Posterior vena cava (tissue), 2 donors: ENCODE measurements at regions of chr1 and their contacts with region 1.

Region 1: DNA sequence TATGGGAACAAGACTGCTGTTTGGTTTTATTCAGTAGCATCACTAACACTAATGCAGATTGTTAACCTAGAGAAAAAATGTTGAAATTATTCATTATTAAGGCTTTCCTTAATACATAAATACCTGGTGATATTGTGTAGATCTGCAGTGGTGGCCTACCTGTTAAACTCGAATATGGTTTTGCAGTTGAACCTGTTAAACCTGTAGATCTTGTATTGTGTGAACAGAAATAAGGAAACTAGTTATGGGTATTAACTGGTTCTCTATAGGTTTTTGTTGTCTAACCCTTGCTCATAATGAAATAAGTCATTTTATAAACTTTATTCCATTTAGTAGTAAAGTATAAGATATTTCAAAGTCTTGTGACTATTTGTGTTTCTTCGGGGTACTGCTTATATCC is 23.9 kb downstream of the PKN2 start:
- DNase-seq: no peak

Region 2: GRCh38 chr1:87880747-87881133 is 827.3 kb before region 1 on chr1:
- intact Hi-C with region 1: loop called in 1 of 2 experiments (anchors 5 kb)
- DNase-seq: no peak

Region 3: GRCh38 chr1:88697503-88697902 is 10.5 kb before region 1 on chr1:
- intact Hi-C with region 1: no loop called
- DNase-seq: no peak

Region 4: GRCh38 chr1:88867743-88868521 is 159.9 kb after region 1 on chr1:
- intact Hi-C with region 1: no loop called
- DNase-seq: no peak